ENCODE measurements at regions of chr11 and their contacts with region 1.

Region 1: GRCh38 chr11:114060392-114061350 is 1.2 kb downstream of the ZBTB16 start:
- DNase-seq: peak in 2 of 4 donors; percentile 42 to 94
- ATAC-seq: peak; percentile 11
- H3K4me3 ChIP-seq: peak overlapping the region; percentile 94 to 95
- H3K27ac ChIP-seq: peak overlapping the region; percentile 83 to 86
- H3K4me1 ChIP-seq: peaks cover 17 to 69% of the 10 kb centered on the region in 2 donors
- H3K27me3 ChIP-seq: peaks cover 0 to 31% of the 10 kb centered on the region in 2 donors
- CTCF ChIP-seq: no peak

Region 2: GRCh38 chr11:114159802-114160632 is 99.3 kb after region 1 on chr11:
- intact Hi-C with region 1: loop called in 1 of 2 experiments (anchors 10 kb)
- DNase-seq: peak; percentile 96 to 99 (median 98)
- ATAC-seq: peak; percentile 79
- H3K4me3 ChIP-seq: peak overlapping the region in 1 of 2 donors; percentile 6
- H3K27ac ChIP-seq: peak overlapping the region; percentile 75 to 84
- H3K4me1 ChIP-seq: peaks cover 63 to 100% of the 10 kb centered on the region in 2 donors
- H3K27me3 ChIP-seq: no peaks in the 10 kb centered on the region
- CTCF ChIP-seq: no peak